B cell (primary cell): ENCODE measurements at regions of chr14 and their contacts with region 1.

Region 1: GRCh38 chr14:101767618-101768362 is 6.3 kb downstream of the PPP2R5C start:
- DNase-seq: no peak
- ATAC-seq: no peak
- H3K4me3 ChIP-seq: no peak overlapping the region
- H3K4me3 Mint-ChIP-seq: no peak overlapping the region
- H3K27ac ChIP-seq: no peak overlapping the region
- H3K27ac Mint-ChIP-seq: no peak overlapping the region
- H3K4me1 ChIP-seq: peaks cover under 1 to 8% of the 10 kb centered on the region in 2 donors
- H3K4me1 Mint-ChIP-seq: peaks cover 12% of the 10 kb centered on the region
- H3K27me3 ChIP-seq: no peaks in the 10 kb centered on the region
- H3K27me3 Mint-ChIP-seq: no peaks in the 10 kb centered on the region
- CTCF ChIP-seq: no peak

Region 2: DNA sequence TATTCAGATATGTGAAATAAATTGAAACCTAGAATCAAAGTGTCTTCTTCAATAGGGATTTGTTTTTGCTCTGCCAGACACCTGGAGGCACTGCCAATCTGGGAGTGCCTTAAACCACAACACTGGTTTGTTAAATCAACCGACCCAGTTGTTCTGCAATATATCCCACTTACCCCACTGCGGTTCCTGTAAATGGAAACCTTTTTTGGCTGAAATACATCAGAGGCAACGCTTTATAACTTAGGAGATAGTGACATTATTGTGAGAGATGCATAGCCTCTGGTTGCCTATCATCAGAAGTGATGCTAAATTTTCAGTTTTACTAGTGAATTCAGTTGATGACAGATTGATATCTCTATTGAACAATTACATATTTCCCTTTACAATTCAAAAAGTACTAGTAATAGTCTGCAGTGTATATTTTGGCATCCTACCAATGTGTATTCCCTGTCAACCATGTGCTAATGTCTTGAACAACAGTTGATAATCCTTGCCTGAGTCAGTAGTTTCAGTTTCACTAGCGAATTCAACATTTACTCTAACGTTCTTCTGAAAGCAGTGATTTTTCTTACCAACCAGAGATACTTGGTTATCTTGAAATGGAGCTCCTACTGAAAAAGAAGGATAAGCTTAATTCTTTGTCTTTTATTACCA is 24.3 kb after region 1 on chr14:
- CTCF ChIA-PET with region 1: interaction called, 23 read pairs
- POLR2A ChIA-PET with region 1: interaction called, 4 read pairs
- intact Hi-C with region 1: no loop called
- DNase-seq: no peak
- ATAC-seq: no peak
- H3K4me3 ChIP-seq: peak overlapping the region in 3 of 5 experiments; percentile 5 to 30 (median 18)
- H3K4me3 Mint-ChIP-seq: peak overlapping the region; percentile 54
- H3K27ac ChIP-seq: no peak overlapping the region
- H3K27ac Mint-ChIP-seq: peak overlapping the region; percentile 5
- H3K4me1 ChIP-seq: peaks cover 5 to 8% of the 10 kb centered on the region in 2 donors
- H3K4me1 Mint-ChIP-seq: peaks cover 18% of the 10 kb centered on the region
- H3K27me3 ChIP-seq: no peaks in the 10 kb centered on the region
- H3K27me3 Mint-ChIP-seq: no peaks in the 10 kb centered on the region
- CTCF ChIP-seq: no peak

Region 3: GRCh38 chr14:101823511-101824120 is 55.8 kb after region 1 on chr14:
- CTCF ChIA-PET with region 1: interaction called, 31 read pairs
- POLR2A ChIA-PET with region 1: interaction called, 4 read pairs
- intact Hi-C with region 1: loop called (anchors 1 kb)
- DNase-seq: peak; percentile 55
- ATAC-seq: peak; percentile 28
- H3K4me3 ChIP-seq: peak overlapping the region in 4 of 5 experiments; percentile 20 to 58 (median 48)
- H3K4me3 Mint-ChIP-seq: peak overlapping the region; percentile 92
- H3K27ac ChIP-seq: peak overlapping the region; percentile 99 to 100
- H3K27ac Mint-ChIP-seq: peak overlapping the region; percentile 99
- H3K4me1 ChIP-seq: peaks cover 80 to 82% of the 10 kb centered on the region in 2 donors
- H3K4me1 Mint-ChIP-seq: peaks cover 88% of the 10 kb centered on the region
- H3K27me3 ChIP-seq: no peaks in the 10 kb centered on the region
- H3K27me3 Mint-ChIP-seq: no peaks in the 10 kb centered on the region
- CTCF ChIP-seq: no peak

Region 4: DNA sequence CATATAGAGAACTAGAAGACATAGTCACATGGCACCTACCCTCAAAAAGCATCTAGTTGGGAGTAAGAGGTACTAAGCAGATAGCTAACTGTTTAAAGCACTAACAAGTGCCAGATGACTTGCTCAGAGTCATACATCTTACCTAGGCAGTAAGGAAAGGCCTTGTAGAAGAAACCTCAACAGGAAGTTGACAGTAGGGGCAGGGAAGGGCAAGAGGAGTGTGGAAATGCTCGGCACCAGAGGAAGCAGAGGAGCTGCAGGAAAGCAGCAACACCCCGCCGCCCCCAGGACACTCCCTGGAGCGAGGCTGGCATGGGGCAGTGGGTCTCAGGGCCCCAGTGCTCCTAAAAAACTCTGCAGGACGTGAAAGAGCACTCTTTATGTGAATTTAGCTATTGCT is 86.6 kb after region 1 on chr14:
- CTCF ChIA-PET with region 1: interaction called, 22 read pairs
- POLR2A ChIA-PET with region 1: no interaction called
- intact Hi-C with region 1: no loop called
- DNase-seq: no peak
- ATAC-seq: no peak
- H3K4me3 ChIP-seq: no peak overlapping the region
- H3K4me3 Mint-ChIP-seq: no peak overlapping the region
- H3K27ac ChIP-seq: peak overlapping the region in 1 of 2 donors; percentile 53
- H3K27ac Mint-ChIP-seq: no peak overlapping the region
- H3K4me1 ChIP-seq: peaks cover 34 to 45% of the 10 kb centered on the region in 2 donors
- H3K4me1 Mint-ChIP-seq: peaks cover 64% of the 10 kb centered on the region
- H3K27me3 ChIP-seq: no peaks in the 10 kb centered on the region
- H3K27me3 Mint-ChIP-seq: no peaks in the 10 kb centered on the region
- CTCF ChIP-seq: no peak

Region 5: DNA sequence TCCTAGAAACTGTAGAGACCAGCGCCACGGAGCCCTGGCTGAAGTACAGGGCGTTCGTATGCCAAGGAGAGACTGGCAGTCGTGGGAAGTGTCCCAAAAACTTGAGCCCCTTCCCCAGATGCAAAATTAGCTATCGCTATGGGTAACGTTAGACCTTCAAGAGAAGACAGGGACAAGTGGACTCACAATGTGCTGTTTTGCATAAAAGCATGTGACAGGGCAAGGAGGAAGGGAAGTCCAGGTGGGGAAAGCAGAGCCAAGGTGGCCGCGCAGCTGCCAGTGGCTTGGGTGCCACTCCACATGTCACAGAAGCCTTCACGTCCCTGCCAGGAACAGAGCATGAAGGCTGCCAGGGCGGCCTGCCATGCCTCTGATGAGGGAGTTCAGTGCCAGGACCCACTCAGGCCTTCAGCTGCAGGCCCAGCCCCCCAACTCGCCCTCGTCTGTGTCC is 135.3 kb after region 1 on chr14:
- CTCF ChIA-PET with region 1: interaction called, 17 read pairs
- POLR2A ChIA-PET with region 1: no interaction called
- intact Hi-C with region 1: no loop called
- DNase-seq: no peak
- ATAC-seq: no peak
- H3K4me3 ChIP-seq: no peak overlapping the region
- H3K4me3 Mint-ChIP-seq: no peak overlapping the region
- H3K27ac ChIP-seq: no peak overlapping the region
- H3K27ac Mint-ChIP-seq: no peak overlapping the region
- H3K4me1 ChIP-seq: no peaks in the 10 kb centered on the region
- H3K4me1 Mint-ChIP-seq: no peaks in the 10 kb centered on the region
- H3K27me3 ChIP-seq: no peaks in the 10 kb centered on the region
- H3K27me3 Mint-ChIP-seq: no peaks in the 10 kb centered on the region
- CTCF ChIP-seq: no peak

Region 6: GRCh38 chr14:101947906-101948665 is 180.3 kb after region 1 on chr14:
- CTCF ChIA-PET with region 1: interaction called, 10 read pairs
- POLR2A ChIA-PET with region 1: interaction called, 4 read pairs
- intact Hi-C with region 1: no loop called
- DNase-seq: peak; percentile 100
- ATAC-seq: peak; percentile 96
- H3K4me3 ChIP-seq: peak overlapping the region; percentile 80 to 99 (median 91)
- H3K4me3 Mint-ChIP-seq: peak overlapping the region; percentile 97
- H3K27ac ChIP-seq: peak overlapping the region; percentile 97 to 99
- H3K27ac Mint-ChIP-seq: peak overlapping the region; percentile 99
- H3K4me1 ChIP-seq: peaks cover 10 to 18% of the 10 kb centered on the region in 2 donors
- H3K4me1 Mint-ChIP-seq: peaks cover 23% of the 10 kb centered on the region
- H3K27me3 ChIP-seq: peaks cover 0 to 13% (median 2%) of the 10 kb centered on the region in 4 experiments
- H3K27me3 Mint-ChIP-seq: peaks cover 25% of the 10 kb centered on the region
- CTCF ChIP-seq: no peak

Region 7: GRCh38 chr14:102096214-102097114 is 328.7 kb after region 1 on chr14:
- CTCF ChIA-PET with region 1: interaction called, 15 read pairs
- POLR2A ChIA-PET with region 1: interaction called, 4 read pairs
- intact Hi-C with region 1: no loop called
- DNase-seq: peak; percentile 69
- ATAC-seq: peak; percentile 73
- H3K4me3 ChIP-seq: no peak overlapping the region
- H3K4me3 Mint-ChIP-seq: no peak overlapping the region
- H3K27ac ChIP-seq: no peak overlapping the region
- H3K27ac Mint-ChIP-seq: no peak overlapping the region
- H3K4me1 ChIP-seq: peaks cover 0 to 3% of the 10 kb centered on the region in 2 donors
- H3K4me1 Mint-ChIP-seq: peaks cover 4% of the 10 kb centered on the region
- H3K27me3 ChIP-seq: no peaks in the 10 kb centered on the region
- H3K27me3 Mint-ChIP-seq: no peaks in the 10 kb centered on the region
- CTCF ChIP-seq: peak; percentile 78